PC-3 (cell line): ENCODE measurements at regions of chr5 and their contacts with region 1.

Region 1: DNA sequence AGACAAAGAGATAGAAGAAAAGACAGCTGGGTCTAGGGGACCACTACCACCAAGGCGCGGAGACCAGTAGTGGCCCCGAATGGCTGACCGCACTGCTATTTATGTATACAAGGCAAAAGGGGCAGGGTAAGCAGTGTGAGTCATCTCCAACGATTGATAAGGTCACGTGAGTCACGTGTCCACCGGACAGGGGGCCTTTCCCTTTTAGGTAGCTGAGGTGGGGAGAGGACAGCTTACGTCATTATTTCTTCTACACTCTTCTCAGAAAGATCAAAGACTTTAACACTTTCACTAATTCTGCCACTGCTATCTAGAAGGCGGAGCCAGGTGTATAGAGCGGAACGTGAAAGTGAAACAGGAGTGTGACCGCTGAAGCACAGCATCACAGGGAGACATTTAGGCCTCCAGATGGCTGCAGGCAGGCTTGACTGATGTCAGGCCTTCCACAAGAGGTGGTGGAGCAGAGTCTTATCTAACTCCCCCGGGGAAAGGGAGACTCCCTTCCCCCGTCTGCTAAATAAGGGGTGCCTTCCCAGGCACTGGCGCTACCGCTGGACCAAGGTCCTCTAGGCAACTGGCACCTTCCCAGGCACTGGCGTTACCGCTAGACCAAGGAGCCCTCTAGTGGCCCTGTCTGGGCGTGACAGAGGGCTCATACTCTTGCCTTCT is 6.1 kb upstream of the PRR16 start:
- DNase-seq: peak; percentile 78
- ATAC-seq: peak; percentile 94
- H3K4me3 ChIP-seq: peak overlapping the region; percentile 79
- H3K27ac ChIP-seq: no peak overlapping the region
- H3K4me1 ChIP-seq: no peaks in the 10 kb centered on the region
- H3K27me3 ChIP-seq: no peaks in the 10 kb centered on the region
- CTCF ChIP-seq: peak; percentile 61

Region 2: GRCh38 chr5:119267958-119268386 is 1190.0 kb before region 1 on chr5:
- CTCF ChIA-PET with region 1: no interaction called
- POLR2A ChIA-PET with region 1: no interaction called
- intact Hi-C with region 1: no loop called
- DNase-seq: peak; percentile 90
- ATAC-seq: peak; percentile 77
- H3K4me3 ChIP-seq: peak overlapping the region; percentile 93
- H3K27ac ChIP-seq: peak overlapping the region; percentile 75
- H3K4me1 ChIP-seq: peaks cover 33% of the 10 kb centered on the region
- H3K27me3 ChIP-seq: no peaks in the 10 kb centered on the region
- CTCF ChIP-seq: no peak

Region 3: GRCh38 chr5:119878723-119879122 is 579.2 kb before region 1 on chr5:
- CTCF ChIA-PET with region 1: no interaction called
- POLR2A ChIA-PET with region 1: no interaction called
- intact Hi-C with region 1: loop called (anchors 5 kb)
- DNase-seq: peak; percentile 31
- ATAC-seq: peak; percentile 48
- H3K4me3 ChIP-seq: no peak overlapping the region
- H3K27ac ChIP-seq: peak overlapping the region; percentile 62
- H3K4me1 ChIP-seq: peaks cover 25% of the 10 kb centered on the region
- H3K27me3 ChIP-seq: no peaks in the 10 kb centered on the region
- CTCF ChIP-seq: no peak

Region 4: GRCh38 chr5:119943148-119943547 is 514.8 kb before region 1 on chr5:
- CTCF ChIA-PET with region 1: no interaction called
- POLR2A ChIA-PET with region 1: no interaction called
- intact Hi-C with region 1: loop called (anchors 1 kb)
- DNase-seq: peak; percentile 26
- ATAC-seq: peak; percentile 63
- H3K4me3 ChIP-seq: no peak overlapping the region
- H3K27ac ChIP-seq: no peak overlapping the region
- H3K4me1 ChIP-seq: no peaks in the 10 kb centered on the region
- H3K27me3 ChIP-seq: no peaks in the 10 kb centered on the region
- CTCF ChIP-seq: peak; percentile 51; the same call in 1 of the 2 replicates

Region 5: DNA sequence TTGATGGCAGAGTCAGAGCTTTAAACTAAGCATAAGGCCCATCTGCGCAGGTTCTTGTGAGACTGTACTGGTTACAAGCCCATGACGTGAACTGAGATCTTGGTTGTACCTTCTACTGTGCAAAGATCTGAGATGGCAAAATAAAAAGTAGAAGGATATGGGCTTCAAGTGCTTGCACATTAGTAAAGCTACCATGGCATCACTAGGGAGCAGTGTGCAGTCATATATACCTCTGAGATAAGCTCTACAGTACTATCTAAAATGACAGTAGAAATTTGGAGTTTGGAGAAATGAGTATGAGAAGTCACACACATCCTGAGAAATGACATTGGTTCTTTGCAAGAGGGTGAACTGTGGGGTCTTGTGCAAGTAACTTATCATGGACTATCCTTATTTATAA is 402.1 kb before region 1 on chr5:
- CTCF ChIA-PET with region 1: interaction called, 7 read pairs
- POLR2A ChIA-PET with region 1: no interaction called
- intact Hi-C with region 1: loop called (anchors 2 kb)
- DNase-seq: peak; percentile 32
- ATAC-seq: peak; percentile 87
- H3K4me3 ChIP-seq: no peak overlapping the region
- H3K27ac ChIP-seq: no peak overlapping the region
- H3K4me1 ChIP-seq: no peaks in the 10 kb centered on the region
- H3K27me3 ChIP-seq: no peaks in the 10 kb centered on the region
- CTCF ChIP-seq: peak; percentile 51; the same call in 1 of the 2 replicates

Region 6: DNA sequence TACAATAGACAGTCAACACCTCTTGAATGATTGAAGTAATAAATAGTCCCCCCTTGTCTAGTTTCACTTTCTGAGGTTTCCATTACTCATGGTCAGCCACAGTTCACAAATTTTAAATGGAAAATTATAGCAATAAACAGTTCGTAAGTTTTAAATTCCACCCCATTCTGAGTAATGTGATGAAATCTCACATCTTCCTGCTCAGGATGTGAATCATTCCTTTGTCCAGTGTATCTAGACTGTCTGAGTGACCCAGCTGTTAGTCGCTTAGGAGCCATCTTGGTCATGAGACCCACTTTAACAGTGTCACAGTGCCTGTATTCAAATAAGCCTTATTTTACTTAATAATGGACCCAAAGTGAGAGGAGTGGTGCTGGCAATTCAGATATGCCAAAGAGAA is 305.5 kb before region 1 on chr5:
- CTCF ChIA-PET with region 1: no interaction called
- POLR2A ChIA-PET with region 1: no interaction called
- intact Hi-C with region 1: loop called (anchors 5 kb)
- DNase-seq: peak; percentile 76
- ATAC-seq: peak; percentile 96
- H3K4me3 ChIP-seq: peak overlapping the region; percentile 34; the same call in 1 of the 2 replicates
- H3K27ac ChIP-seq: peak overlapping the region; percentile 93
- H3K4me1 ChIP-seq: peaks cover 20% of the 10 kb centered on the region
- H3K27me3 ChIP-seq: no peaks in the 10 kb centered on the region
- CTCF ChIP-seq: no peak

Region 7: DNA sequence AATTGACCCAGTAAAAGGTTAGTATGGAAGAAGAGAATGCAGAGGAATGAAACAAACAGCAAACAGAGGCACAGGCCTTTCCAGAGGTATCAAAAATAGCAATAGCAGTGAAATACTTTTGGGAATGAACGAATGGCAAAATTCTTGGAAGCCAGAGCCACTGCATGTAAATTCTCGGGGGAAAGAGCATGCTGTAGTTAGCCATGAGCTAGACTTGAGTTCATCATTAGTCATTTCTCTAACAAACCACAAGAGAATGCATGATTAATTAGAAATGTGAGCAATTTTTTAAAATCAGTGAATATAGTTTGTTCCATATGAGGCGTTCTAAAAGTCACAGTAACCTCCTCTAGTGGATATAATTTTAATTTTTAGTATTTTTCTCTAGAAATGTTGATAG is 164.2 kb before region 1 on chr5:
- CTCF ChIA-PET with region 1: no interaction called
- POLR2A ChIA-PET with region 1: no interaction called
- intact Hi-C with region 1: loop called (anchors 10 kb)
- DNase-seq: peak; percentile 63
- ATAC-seq: peak; percentile 86
- H3K4me3 ChIP-seq: peak overlapping the region; percentile 23; the same call in 1 of the 2 replicates
- H3K27ac ChIP-seq: peak overlapping the region; percentile 58
- H3K4me1 ChIP-seq: peaks cover 14% of the 10 kb centered on the region
- H3K27me3 ChIP-seq: no peaks in the 10 kb centered on the region
- CTCF ChIP-seq: no peak

Region 8: DNA sequence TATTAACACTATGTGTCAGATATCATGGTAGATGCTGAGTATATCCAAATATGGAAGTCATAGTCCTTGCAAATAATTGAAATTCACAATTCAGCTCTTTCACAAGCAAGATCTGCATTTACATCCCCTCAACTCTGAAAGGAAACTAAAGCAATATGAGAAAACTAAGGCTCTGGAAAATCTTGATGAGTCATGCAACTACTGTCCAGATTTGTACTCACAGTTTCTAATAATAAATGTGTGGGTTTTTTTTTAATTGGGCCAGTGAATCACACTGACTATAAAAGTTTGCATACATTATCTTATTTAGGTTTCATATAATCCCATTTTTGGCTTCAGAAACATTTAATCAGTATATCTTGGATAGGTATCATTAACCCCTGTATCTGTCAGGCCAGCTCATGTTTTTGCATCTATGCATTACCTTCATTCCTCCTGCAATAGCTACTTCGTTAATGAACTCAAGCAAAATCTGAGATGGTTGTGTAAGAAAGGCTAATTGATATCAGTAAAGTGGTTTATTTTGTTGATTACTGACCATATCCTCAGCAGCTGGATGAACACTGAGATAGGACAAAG is 52.6 kb before region 1 on chr5:
- CTCF ChIA-PET with region 1: no interaction called
- POLR2A ChIA-PET with region 1: no interaction called
- intact Hi-C with region 1: no loop called
- DNase-seq: peak; percentile 31
- ATAC-seq: 0 out of 2 replicates have a peak, but pooled peaks have one; percentile 15
- H3K4me3 ChIP-seq: no peak overlapping the region
- H3K27ac ChIP-seq: no peak overlapping the region
- H3K4me1 ChIP-seq: peaks cover 8% of the 10 kb centered on the region
- H3K27me3 ChIP-seq: no peaks in the 10 kb centered on the region
- CTCF ChIP-seq: no peak